GM12878 (cell line): ENCODE measurements at regions of chr1 and their contacts with region 1.

Region 1: DNA sequence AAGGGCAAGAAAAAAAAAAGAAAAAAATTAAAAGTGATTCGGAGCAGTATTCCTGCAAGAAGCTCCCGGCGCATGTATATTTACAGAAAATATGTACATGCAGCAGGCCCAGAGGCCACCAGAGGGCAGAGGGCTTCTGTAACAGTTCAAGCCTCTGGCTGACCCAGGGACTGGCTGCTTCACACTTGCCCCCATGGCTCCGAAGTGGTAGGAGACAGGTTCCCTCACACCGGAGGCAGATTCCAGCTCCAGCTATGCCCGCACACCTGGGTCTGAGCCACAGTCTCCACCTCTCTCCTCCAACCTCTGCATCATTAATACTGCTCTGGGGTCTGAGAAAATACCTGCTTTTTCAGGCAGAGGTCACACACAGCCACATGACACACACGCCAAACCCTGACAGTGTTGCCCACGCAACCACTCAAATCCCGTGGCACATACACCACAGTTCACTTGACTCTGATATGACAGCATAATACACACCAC is 2.2 kb upstream of the ARHGAP30 start:
- DNase-seq: no peak
- ATAC-seq: no peak
- H3K4me3 ChIP-seq: no peak overlapping the region
- H3K27ac ChIP-seq: no peak overlapping the region
- H3K4me1 ChIP-seq: peaks cover 16% of the 10 kb centered on the region
- H3K27me3 ChIP-seq: no peaks in the 10 kb centered on the region
- CTCF ChIP-seq: peak; percentile 68 to 75 (median 72)
- EP300 ChIP-seq: no peak
- POLR2A ChIP-seq: no peak
- RAD21 ChIP-seq: peak; percentile 78

Region 2: DNA sequence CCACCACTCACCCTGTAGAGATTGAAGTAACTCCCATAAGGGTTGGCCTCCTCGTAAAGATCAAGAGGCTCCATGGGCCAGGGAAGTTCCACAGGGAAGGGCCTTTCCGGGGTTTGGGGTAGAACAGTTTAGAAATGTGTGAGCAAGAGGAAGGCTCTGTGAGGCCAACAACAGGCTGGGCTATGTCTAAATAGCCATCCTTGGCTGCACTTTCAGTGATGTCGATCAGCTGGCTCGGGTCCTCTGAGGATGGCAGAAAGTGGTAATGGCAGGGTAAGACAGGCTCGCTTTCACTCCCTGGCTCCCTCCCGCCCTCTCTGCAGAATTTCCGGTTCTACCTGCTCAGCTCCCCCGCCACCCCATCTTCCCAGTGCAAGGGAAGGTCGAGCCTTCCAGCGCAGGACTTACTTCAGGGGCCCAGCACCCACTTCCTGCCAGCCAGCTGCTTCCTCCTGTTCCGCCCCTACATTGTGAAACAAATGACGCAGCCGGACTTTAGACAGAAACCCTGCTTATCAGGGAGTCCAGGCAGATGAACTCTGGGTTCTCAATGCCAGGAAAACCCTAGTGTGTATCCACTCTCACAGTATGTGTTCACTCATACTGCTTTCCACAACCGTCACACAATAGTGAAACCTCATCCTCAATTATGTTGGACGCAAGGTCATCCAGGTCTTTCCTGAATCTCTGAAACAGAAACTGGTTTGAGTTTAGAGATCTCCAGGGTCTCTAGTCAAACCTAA is 58.3 kb before region 1 on chr1:
- CTCF ChIA-PET with region 1: interaction called, 3 read pairs
- POLR2A ChIA-PET with region 1: interaction called, 8 read pairs
- RAD21 ChIA-PET with region 1: interaction called, 40 read pairs
- SMC1A ChIA-PET with region 1: interaction called, 12 read pairs
- in situ Hi-C with region 1: no loop called
- intact Hi-C with region 1: loop called (anchors 2 kb)
- DNase-seq: peak; percentile 74
- ATAC-seq: peak; percentile 92
- H3K4me3 ChIP-seq: peak overlapping the region; percentile 65
- H3K27ac ChIP-seq: peak overlapping the region; percentile 97
- H3K4me1 ChIP-seq: peaks cover 28% of the 10 kb centered on the region
- H3K27me3 ChIP-seq: no peaks in the 10 kb centered on the region
- CTCF ChIP-seq: no peak
- EP300 ChIP-seq: peak in 1 of 2 experiments; percentile 39; a peak in 1 of 4 replicates
- POLR2A ChIP-seq: peak; percentile 74
- RAD21 ChIP-seq: no peak

Region 3: DNA sequence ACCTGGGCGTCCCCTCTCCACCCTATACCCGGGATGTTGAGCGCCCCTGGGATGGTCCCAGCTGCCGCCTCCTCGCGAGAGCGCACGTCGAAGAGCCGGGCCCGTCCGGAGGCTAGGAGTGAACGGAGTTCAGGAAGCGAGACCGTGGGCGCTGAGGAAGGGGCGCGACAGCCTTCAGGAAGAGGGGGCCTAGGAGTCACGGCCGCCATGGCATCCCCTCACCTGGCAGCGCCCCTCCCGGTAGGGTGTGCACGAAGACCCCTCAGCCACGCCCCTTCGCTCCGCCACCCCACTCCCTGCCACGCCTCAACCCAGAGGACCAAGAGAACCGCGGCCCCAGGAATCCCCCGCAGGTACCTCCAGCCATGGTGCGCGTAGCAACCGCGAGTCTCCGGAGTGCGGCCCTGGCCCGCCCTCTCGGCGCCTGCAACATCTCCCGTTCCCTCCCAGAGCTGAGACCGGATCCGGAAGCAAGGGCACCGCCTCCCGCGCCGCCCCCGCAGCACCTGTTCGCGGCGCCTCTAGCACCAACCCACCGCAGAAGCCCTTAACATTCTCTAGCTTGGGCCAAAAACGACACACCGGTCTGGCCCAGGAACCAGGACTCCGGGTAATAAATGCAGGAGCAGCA is 33.3 kb before region 1 on chr1 and contains the start of gene TSTD1:
- CTCF ChIA-PET with region 1: interaction called, 84 read pairs
- POLR2A ChIA-PET with region 1: interaction called, 139 read pairs
- RAD21 ChIA-PET with region 1: interaction called, 107 read pairs
- SMC1A ChIA-PET with region 1: interaction called, 134 read pairs
- in situ Hi-C with region 1: no loop called
- intact Hi-C with region 1: no loop called
- DNase-seq: no peak
- ATAC-seq: peak; percentile 94
- H3K4me3 ChIP-seq: peak within 1 kb of the TSS; percentile 87
- H3K27ac ChIP-seq: peak within 1 kb of the TSS; percentile 69
- H3K4me1 ChIP-seq: peaks cover 12% of the 10 kb centered on the region
- H3K27me3 ChIP-seq: no peaks in the 10 kb centered on the region
- CTCF ChIP-seq: no peak
- EP300 ChIP-seq: no peak
- POLR2A ChIP-seq: peak; percentile 96
- RAD21 ChIP-seq: no peak
- polyA plus RNA-seq, gene TSTD1: 102 to 145 TPM

Region 4: GRCh38 chr1:161098210-161099068 is 26.5 kb after region 1 on chr1 and contains the start of gene KLHDC9:
- CTCF ChIA-PET with region 1: interaction called, 111 read pairs
- POLR2A ChIA-PET with region 1: interaction called, 66 read pairs
- RAD21 ChIA-PET with region 1: interaction called, 90 read pairs
- SMC1A ChIA-PET with region 1: interaction called, 110 read pairs
- in situ Hi-C with region 1: no loop called
- intact Hi-C with region 1: loop called (anchors 1 kb)
- DNase-seq: peak; percentile 87
- ATAC-seq: peak; percentile 91
- H3K4me3 ChIP-seq: peak within 1 kb of the TSS; percentile 74
- H3K27ac ChIP-seq: peak within 1 kb of the TSS; percentile 66
- H3K4me1 ChIP-seq: peaks cover 29% of the 10 kb centered on the region
- H3K27me3 ChIP-seq: no peaks in the 10 kb centered on the region
- CTCF ChIP-seq: peak in 2 of 3 experiments; percentile 20 to 22; a peak in 3 of 6 replicates
- EP300 ChIP-seq: no peak; a peak in 1 of 4 replicates
- POLR2A ChIP-seq: no peak
- RAD21 ChIP-seq: no peak
- polyA plus RNA-seq, gene KLHDC9: 0.66 to 1.3 TPM

Region 5: DNA sequence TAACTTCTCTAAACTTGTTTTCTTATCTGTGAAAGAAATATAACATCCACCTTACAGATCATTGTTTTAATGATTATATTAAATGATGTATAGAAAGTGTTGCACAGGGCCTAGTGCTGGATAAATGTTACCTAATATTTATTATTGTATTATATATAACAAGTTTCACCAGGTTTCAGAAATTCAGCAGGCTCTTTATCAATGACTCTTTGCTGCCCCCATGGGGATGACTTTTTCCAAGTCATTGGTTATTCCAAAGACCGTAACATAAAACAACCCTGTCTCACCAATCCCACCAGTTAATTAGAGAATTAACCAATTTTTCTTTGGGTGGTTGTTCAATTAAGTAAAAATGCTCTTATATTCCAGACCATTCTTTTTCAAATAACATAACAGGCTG is 67.8 kb after region 1 on chr1:
- CTCF ChIA-PET with region 1: interaction called, 52 read pairs
- POLR2A ChIA-PET with region 1: no interaction called
- RAD21 ChIA-PET with region 1: interaction called, 15 read pairs
- SMC1A ChIA-PET with region 1: interaction called, 15 read pairs
- in situ Hi-C with region 1: no loop called
- intact Hi-C with region 1: no loop called
- DNase-seq: no peak
- ATAC-seq: peak; percentile 74
- H3K4me3 ChIP-seq: no peak overlapping the region
- H3K27ac ChIP-seq: no peak overlapping the region
- H3K4me1 ChIP-seq: no peaks in the 10 kb centered on the region
- H3K27me3 ChIP-seq: no peaks in the 10 kb centered on the region
- CTCF ChIP-seq: peak; percentile 40 to 61 (median 44)
- EP300 ChIP-seq: no peak
- POLR2A ChIP-seq: no peak
- RAD21 ChIP-seq: peak; percentile 74